GM23248 (cell line): ENCODE measurements at regions of chr7 and their contacts with region 1.

Region 1: GRCh38 chr7:74379938-74380337 is 73.8 kb upstream of the GTF2IRD1 start:
- DNase-seq: peak; percentile 32
- H3K4me3 ChIP-seq: no peak overlapping the region
- H3K27ac ChIP-seq: no peak overlapping the region
- H3K4me1 ChIP-seq: no peaks in the 10 kb centered on the region
- H3K27me3 ChIP-seq: no peaks in the 10 kb centered on the region

Region 2: GRCh38 chr7:73851410-73852234 is 528.3 kb before region 1 on chr7:
- in situ Hi-C with region 1: loop called (anchors 25 kb)
- DNase-seq: peak; percentile 97
- H3K4me3 ChIP-seq: peak overlapping the region; percentile 38
- H3K27ac ChIP-seq: peak overlapping the region; percentile 99
- H3K4me1 ChIP-seq: peaks cover 41% of the 10 kb centered on the region
- H3K27me3 ChIP-seq: no peaks in the 10 kb centered on the region

Region 3: DNA sequence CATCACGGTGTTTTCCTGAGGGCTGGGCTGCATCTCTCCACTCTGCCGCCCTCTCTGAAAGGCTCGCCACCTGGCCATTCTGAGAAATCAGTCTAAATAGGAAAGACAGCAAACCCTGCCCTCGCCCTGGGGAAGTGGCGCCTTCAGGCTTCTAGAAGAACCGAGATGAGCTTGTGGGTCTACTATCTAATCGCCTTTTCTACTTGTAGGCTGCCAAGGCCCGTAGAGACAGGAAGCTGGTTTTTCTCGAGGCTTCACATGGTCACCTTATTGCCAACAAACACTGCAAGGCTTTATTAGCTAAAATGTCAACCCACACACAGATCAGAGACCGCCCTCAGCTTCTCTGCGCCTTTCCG is 148.7 kb before region 1 on chr7:
- in situ Hi-C with region 1: loop called (anchors 25 kb)
- DNase-seq: no peak
- H3K4me3 ChIP-seq: no peak overlapping the region
- H3K27ac ChIP-seq: no peak overlapping the region
- H3K4me1 ChIP-seq: no peaks in the 10 kb centered on the region
- H3K27me3 ChIP-seq: no peaks in the 10 kb centered on the region